Panc1 (cell line): ENCODE measurements at regions of chr4 and their contacts with region 1.

Region 1: GRCh38 chr4:82428969-82429727 is 1.1 kb downstream of the HNRNPDL start:
- DNase-seq: peak; percentile 35
- ATAC-seq: peak; percentile 81
- H3K4me3 ChIP-seq: peak overlapping the region; percentile 96 to 98
- H3K27ac ChIP-seq: peak overlapping the region; percentile 89
- H3K4me1 ChIP-seq: peaks cover 20% of the 10 kb centered on the region
- H3K27me3 ChIP-seq: no peaks in the 10 kb centered on the region
- CTCF ChIP-seq: peak; percentile 90

Region 2: GRCh38 chr4:82367438-82368097 is 61.6 kb before region 1 on chr4:
- CTCF ChIA-PET with region 1: no interaction called
- POLR2A ChIA-PET with region 1: interaction called, 14 read pairs
- in situ Hi-C with region 1: no loop called
- intact Hi-C with region 1: loop called (anchors 5 kb)
- DNase-seq: no peak
- ATAC-seq: no peak
- H3K4me3 ChIP-seq: no peak overlapping the region
- H3K27ac ChIP-seq: no peak overlapping the region
- H3K4me1 ChIP-seq: peaks cover 37% of the 10 kb centered on the region
- H3K27me3 ChIP-seq: no peaks in the 10 kb centered on the region
- CTCF ChIP-seq: no peak

Region 3: DNA sequence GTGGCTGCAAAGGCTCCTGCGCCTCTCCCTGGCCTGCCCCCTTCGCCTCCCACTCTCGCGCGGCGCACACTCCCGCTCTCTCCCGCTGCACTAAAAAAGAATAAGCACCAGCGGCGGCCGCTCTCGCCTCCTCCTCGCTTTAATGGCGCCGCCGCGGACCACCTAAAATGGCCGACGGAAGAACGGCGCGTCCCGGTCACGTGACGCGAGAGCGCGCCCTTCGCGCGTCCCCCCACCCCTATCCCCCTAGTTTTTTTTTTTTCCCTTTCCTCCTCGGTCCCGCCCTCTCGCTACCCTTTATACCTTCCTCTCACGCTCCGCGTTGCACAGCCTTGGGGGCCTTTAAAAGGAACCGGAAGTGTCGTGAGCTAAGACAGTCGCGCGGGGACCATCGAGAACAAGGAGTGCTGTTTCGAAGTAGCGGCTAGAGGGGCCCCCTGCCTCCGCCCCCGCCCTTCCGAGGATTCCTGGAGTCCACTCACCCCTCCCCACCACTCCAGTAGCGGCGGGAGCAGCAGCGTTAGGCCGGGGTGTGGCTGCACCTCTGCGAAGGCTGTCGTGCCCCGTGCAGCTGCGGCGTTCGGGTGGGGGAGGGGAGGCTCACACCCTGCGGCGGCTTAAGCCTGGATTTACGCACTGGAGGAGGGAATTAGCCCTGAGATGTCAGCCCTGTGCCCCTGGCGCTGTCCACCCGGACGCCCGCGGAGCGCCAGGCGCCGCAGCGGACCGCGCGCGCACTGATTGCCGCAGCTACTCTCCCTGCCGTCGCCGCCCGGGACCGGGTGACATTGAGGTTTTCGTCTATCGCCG is 55.1 kb before region 1 on chr4 and contains the start of gene HNRNPD:
- CTCF ChIA-PET with region 1: no interaction called
- POLR2A ChIA-PET with region 1: interaction called, 5 read pairs
- in situ Hi-C with region 1: no loop called
- intact Hi-C with region 1: loop called (anchors 5 kb)
- DNase-seq: peak; percentile 92
- ATAC-seq: peak; percentile 92
- H3K4me3 ChIP-seq: peak within 1 kb of the TSS; percentile 67 to 84
- H3K27ac ChIP-seq: peak within 1 kb of the TSS; percentile 96
- H3K4me1 ChIP-seq: peaks cover 19% of the 10 kb centered on the region
- H3K27me3 ChIP-seq: no peaks in the 10 kb centered on the region
- CTCF ChIP-seq: no peak
- total RNA-seq, gene HNRNPD: 170 TPM